Left cardiac atrium (tissue), 4 donors: ENCODE measurements at regions of chr9 and their contacts with region 1.

Region 1: GRCh38 chr9:69190086-69190862 is 16.2 kb downstream of the TJP2 start:
- DNase-seq: no peak
- ATAC-seq: no peak

Region 2: GRCh38 chr9:68685770-68686169 is 504.5 kb before region 1 on chr9:
- intact Hi-C with region 1: no loop called
- DNase-seq: no peak
- ATAC-seq: no peak

Region 3: GRCh38 chr9:69035438-69036308 is 154.6 kb before region 1 on chr9 and contains the start of gene FXN:
- intact Hi-C with region 1: loop called in 1 of 2 experiments (anchors 5 kb)
- DNase-seq: peak; percentile 85
- ATAC-seq: peak; percentile 97 to 98
- total RNA-seq, gene FXN: 27.7 to 29.8 TPM

Region 4: DNA sequence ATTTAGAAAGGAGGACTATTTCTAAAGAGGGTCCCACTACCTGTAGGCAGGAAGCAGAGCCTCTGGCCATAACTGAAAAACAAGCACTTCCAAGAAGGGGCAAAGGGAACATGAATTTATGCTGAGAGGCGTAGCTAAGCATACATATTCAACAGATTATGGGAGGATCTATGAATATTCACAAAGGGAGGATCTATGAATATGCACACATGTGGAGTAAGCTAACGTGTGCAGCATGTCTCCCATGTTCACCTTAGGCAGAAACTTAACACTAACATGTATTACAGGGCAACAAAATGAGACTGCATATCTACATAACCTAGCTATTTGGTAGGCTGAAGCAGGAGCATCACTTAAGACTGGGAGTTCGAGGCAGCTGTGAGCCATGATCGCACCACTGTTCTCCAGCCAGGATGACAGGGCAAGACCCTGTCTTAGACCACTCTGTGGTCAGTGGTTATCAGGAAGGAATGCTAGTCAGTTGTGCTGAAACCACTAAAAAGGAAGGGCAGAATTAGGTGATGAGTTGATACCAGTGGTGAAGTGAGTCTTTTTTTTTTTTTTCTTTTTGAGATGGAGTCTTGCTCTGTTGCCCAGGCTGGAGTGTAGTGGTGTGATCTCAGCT is 134.0 kb before region 1 on chr9:
- intact Hi-C with region 1: loop called (anchors 1 to 5 kb)
- DNase-seq: no peak
- ATAC-seq: no peak

Region 5: DNA sequence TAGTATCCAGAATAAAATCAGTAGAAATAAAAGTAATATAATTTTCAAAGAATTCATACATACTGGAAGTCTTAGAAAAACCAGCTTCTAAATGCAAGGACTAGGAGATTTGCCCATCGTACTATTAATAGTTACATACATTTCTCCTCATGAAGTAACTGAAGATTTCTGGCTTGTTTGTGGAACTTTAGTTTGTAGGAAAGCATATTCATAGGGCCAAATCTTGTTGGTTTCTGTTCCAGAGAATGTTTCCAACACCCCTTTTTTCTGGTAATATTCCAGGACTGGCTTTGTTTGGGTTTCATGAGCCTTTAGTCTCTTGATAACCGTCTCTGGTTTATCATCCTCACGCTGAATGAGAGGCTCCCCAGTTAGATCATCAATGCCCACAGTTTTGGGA is 82.5 kb before region 1 on chr9:
- intact Hi-C with region 1: no loop called
- DNase-seq: no peak
- ATAC-seq: no peak